Activated CD8-positive, alpha-beta memory T cell treated with anti-CD3 and anti-CD28 coated beads, Interleukin-2, amount 10 ng/mL, durations not matched to agents 7 days and 5 days (primary cell): ENCODE measurements at regions of chr11 and their contacts with region 1.

Region 1: DNA sequence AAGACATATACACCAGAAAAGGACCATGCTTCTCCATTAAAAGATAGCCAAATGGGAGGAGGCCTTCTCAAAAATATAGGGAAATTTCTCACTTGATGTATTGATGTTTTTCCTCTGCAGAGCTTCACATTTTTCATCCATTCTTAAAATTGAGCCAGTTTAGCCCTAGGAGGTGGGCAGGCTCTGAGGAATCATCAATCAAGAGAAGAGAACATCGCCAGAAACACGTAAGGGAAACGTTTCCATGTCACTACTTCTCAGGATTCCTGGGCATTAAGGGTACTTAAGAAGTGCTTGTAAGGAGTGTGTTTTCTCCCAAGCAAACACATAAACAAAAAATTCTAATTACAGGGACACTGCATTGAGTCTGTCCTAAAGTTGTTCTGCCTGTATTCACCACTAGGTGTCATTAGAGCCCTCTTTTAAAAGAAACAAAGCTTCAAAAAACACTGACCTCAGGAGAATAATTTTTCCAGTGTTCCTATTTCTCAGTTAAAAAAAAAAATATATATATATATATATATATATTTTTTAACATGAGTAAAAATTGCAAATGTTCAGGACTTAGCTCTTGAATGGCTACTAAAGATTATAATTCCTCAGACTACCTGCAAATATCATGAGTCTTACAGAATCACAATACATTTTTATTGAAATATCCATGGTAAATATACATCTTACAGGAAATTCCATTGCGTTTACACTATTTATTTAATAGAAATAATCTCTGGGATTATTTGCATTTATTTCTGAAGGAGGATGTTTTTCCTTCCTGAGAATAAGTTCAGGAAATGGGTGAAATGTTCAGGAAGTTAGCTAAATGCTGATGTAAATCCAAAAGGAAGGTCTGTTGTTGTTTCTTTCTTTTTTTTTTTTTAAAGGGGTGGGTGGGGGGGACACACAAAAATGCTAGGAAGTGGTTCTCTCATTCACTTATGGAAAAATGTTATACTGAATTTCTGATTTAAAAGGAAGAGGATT is 16.0 kb downstream of the FZD4 start:
- DNase-seq: no peak
- ATAC-seq: peak; percentile 49
- H3K4me3 Mint-ChIP-seq: no peak overlapping the region
- H3K27ac Mint-ChIP-seq: no peak overlapping the region
- H3K4me1 Mint-ChIP-seq: no peaks in the 10 kb centered on the region
- H3K27me3 Mint-ChIP-seq: peaks cover 4% of the 10 kb centered on the region

Region 2: DNA sequence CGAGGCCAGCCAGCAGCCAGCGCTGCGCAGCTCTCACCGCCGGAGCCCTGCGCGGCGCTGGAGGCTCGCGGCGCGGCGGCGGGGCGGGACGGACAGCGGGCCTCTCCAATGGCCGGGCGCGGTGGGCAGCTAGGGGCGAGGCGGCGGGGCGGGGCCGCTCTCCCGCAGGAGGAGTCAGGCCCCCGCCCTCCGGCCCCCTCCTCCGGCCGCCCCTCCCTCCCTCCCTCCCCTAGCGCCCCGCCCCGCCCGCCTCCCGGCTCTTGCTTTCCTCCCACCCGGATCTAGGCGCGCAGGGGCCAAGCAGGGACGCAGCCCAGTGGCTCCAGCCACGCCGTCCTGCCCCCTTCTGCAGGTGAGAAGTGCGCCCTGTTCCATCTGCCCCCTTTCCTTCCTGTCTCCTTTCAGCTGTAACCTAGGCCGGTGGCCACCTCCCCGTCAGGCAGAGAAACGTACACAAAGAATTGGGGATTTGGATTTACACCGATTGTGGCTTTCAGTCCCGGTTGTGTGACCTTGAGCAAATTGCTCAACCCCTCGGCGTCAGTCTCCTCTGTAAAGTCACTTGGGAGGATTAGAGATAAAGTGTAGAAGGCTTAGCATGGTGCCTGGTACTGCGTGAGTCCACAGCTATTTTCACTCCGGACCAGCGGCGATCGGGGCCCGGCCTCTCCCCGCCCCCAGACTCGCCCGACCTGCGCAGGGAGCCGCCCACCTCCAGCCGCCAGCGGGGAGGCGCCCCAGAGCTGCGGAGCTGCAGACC is 16.4 kb after region 1 on chr11 and contains the start of gene FZD4:
- CTCF ChIA-PET with region 1: interaction called, 19 read pairs
- DNase-seq: peak; percentile 77
- ATAC-seq: peak; percentile 94
- H3K4me3 Mint-ChIP-seq: peak within 1 kb of the TSS; percentile 87
- H3K27ac Mint-ChIP-seq: peak within 1 kb of the TSS; percentile 30
- H3K4me1 Mint-ChIP-seq: peaks cover 11% of the 10 kb centered on the region
- H3K27me3 Mint-ChIP-seq: peaks cover 70% of the 10 kb centered on the region
- total RNA-seq, gene FZD4: 0.16 to 0.44 TPM

Region 3: GRCh38 chr11:87290304-87290922 is 351.2 kb after region 1 on chr11:
- CTCF ChIA-PET with region 1: interaction called, 21 read pairs
- DNase-seq: no peak
- ATAC-seq: no peak
- H3K4me3 Mint-ChIP-seq: no peak overlapping the region
- H3K27ac Mint-ChIP-seq: no peak overlapping the region
- H3K4me1 Mint-ChIP-seq: no peaks in the 10 kb centered on the region
- H3K27me3 Mint-ChIP-seq: no peaks in the 10 kb centered on the region

Region 4: DNA sequence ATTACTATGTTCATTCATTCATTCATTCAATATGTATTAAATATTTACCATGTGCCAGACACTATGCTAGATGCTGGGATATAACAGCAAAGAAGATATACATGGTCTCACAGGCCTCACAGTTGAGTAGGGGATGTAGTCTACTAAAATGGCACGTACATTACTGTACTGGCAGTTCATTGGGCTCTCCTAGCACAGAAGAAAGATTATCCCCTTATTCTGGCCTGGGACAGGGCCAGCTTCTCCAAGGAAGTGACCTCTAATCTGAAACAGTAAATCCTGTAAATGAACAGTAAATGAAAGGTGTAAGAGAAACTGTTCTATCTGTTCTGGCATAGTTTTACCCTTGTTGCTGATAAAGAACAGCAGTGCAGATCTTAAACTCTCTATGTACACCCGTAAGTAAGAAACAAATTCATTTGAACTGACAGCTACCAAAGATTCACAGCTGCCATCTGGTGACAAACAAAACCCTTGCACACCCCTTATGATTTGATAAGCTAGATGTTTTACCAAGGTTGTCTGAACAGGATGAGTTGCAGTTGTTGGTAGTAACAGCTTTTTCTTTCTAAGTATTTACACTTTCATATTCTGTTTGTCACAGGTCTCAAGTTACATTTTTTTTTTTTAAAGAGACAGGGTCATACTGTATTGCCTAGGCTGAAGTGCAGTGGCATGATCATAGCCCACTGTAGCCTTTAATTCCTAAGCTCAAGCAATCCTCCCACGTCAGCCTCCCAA is 361.6 kb after region 1 on chr11:
- CTCF ChIA-PET with region 1: interaction called, 13 read pairs
- DNase-seq: no peak
- ATAC-seq: peak; percentile 57
- H3K4me3 Mint-ChIP-seq: no peak overlapping the region
- H3K27ac Mint-ChIP-seq: no peak overlapping the region
- H3K4me1 Mint-ChIP-seq: peaks cover 14% of the 10 kb centered on the region
- H3K27me3 Mint-ChIP-seq: no peaks in the 10 kb centered on the region

Region 5: GRCh38 chr11:87421422-87421821 is 482.2 kb after region 1 on chr11:
- CTCF ChIA-PET with region 1: interaction called, 15 read pairs
- DNase-seq: no peak
- ATAC-seq: peak; percentile 69
- H3K4me3 Mint-ChIP-seq: no peak overlapping the region
- H3K27ac Mint-ChIP-seq: no peak overlapping the region
- H3K4me1 Mint-ChIP-seq: no peaks in the 10 kb centered on the region
- H3K27me3 Mint-ChIP-seq: peaks cover 3% of the 10 kb centered on the region